GM12878 (cell line): ENCODE measurements at regions of chr7 and their contacts with region 1.

Region 1: DNA sequence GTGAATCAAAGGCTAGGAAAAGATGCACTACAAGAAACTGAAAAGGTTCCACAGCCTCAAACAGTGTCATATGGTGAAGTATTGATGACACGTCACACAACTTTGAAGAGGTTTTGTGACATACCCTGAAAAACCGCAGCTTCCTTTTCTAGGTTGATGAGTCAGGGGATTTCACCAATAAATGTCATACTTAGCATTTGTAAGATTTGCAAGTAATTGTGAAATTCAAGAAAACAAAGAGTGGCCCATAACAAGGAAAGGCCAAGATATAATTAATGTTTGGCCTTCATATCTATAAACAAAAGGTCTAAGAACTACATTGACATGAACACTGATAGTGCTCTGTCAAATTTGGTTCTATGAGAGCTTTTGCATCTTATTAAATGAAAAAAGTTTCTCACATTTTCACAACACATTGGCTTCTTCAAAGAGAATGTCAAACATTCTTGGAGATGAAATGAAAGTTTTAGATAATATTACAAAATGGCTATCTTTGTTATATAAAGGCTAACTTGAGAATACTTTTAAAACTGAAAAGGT is 62.0 kb upstream of the NAMPT start:
- DNase-seq: peak; percentile 92
- ATAC-seq: peak; percentile 86
- H3K4me3 ChIP-seq: no peak overlapping the region
- H3K27ac ChIP-seq: peak overlapping the region; percentile 80
- H3K4me1 ChIP-seq: peaks cover 20% of the 10 kb centered on the region
- H3K27me3 ChIP-seq: no peaks in the 10 kb centered on the region
- CTCF ChIP-seq: no peak
- EP300 ChIP-seq: peak; percentile 99
- POLR2A ChIP-seq: no peak
- RAD21 ChIP-seq: no peak

Region 2: DNA sequence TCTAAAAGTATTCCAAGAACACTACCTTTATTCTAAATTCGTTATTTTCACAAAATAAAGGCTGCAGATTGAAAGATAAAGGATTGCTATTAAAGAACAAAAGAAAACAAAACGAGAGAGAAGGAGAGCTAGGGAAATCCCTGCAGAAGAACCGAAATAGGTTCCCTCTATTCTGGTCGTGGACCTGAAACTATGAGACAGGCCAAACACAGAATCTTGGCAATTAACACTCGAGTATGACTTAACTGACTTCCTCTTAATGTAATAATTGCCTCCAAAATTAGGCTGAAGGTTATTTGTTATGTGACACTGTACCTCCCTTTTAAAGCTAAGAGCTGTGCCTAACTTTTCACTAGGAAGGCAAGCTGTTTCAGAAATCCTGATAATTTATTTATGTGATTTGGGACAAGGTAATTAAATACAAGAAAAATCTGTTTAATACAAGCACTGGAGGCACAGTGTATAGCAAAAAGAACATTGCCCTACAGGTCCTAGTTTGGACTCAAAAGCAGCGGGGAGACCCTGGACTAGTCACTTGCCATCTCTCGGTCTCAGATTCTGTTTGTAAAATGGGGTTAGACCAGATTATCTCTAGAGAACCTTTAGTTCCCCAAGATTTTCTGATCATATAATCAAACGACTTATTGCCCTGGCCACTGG is 73.6 kb before region 1 on chr7:
- CTCF ChIA-PET with region 1: no interaction called
- POLR2A ChIA-PET with region 1: interaction called, 4 read pairs
- RAD21 ChIA-PET with region 1: interaction called, 11 read pairs
- SMC1A ChIA-PET with region 1: interaction called, 9 read pairs
- in situ Hi-C with region 1: no loop called
- intact Hi-C with region 1: no loop called
- DNase-seq: peak; percentile 50
- ATAC-seq: peak; percentile 74
- H3K4me3 ChIP-seq: peak overlapping the region; percentile 28; the same call in 1 of the 2 replicates
- H3K27ac ChIP-seq: no peak overlapping the region
- H3K4me1 ChIP-seq: peaks cover 13% of the 10 kb centered on the region; the same call in 1 of the 2 replicates
- H3K27me3 ChIP-seq: no peaks in the 10 kb centered on the region
- CTCF ChIP-seq: no peak
- EP300 ChIP-seq: peak; percentile 38 to 45; a peak in 2 of 4 replicates
- POLR2A ChIP-seq: no peak
- RAD21 ChIP-seq: no peak

Region 3: GRCh38 chr7:106279425-106280197 is 67.1 kb before region 1 on chr7:
- CTCF ChIA-PET with region 1: interaction called, 20 read pairs
- POLR2A ChIA-PET with region 1: interaction called, 47 read pairs
- RAD21 ChIA-PET with region 1: interaction called, 87 read pairs
- SMC1A ChIA-PET with region 1: interaction called, 60 read pairs
- in situ Hi-C with region 1: no loop called
- intact Hi-C with region 1: no loop called
- DNase-seq: no peak
- ATAC-seq: peak; percentile 47
- H3K4me3 ChIP-seq: peak overlapping the region; percentile 16; the same call in 1 of the 2 replicates
- H3K27ac ChIP-seq: no peak overlapping the region
- H3K4me1 ChIP-seq: peaks cover 7% of the 10 kb centered on the region; the same call in 1 of the 2 replicates
- H3K27me3 ChIP-seq: no peaks in the 10 kb centered on the region
- CTCF ChIP-seq: no peak
- EP300 ChIP-seq: no peak
- POLR2A ChIP-seq: no peak
- RAD21 ChIP-seq: no peak

Region 4: GRCh38 chr7:106285051-106285854 is 61.5 kb before region 1 on chr7:
- CTCF ChIA-PET with region 1: interaction called, 20 read pairs
- POLR2A ChIA-PET with region 1: interaction called, 47 read pairs
- RAD21 ChIA-PET with region 1: interaction called, 87 read pairs
- SMC1A ChIA-PET with region 1: interaction called, 60 read pairs
- in situ Hi-C with region 1: loop called (anchors 5 kb)
- intact Hi-C with region 1: loop called (anchors 1 kb)
- DNase-seq: peak; percentile 97
- ATAC-seq: peak; percentile 77
- H3K4me3 ChIP-seq: peak overlapping the region; percentile 99
- H3K27ac ChIP-seq: peak overlapping the region; percentile 100
- H3K4me1 ChIP-seq: peaks cover 3% of the 10 kb centered on the region
- H3K27me3 ChIP-seq: no peaks in the 10 kb centered on the region
- CTCF ChIP-seq: no peak
- EP300 ChIP-seq: peak; percentile 42 to 52; a peak in 2 of 4 replicates
- POLR2A ChIP-seq: peak; percentile 78
- RAD21 ChIP-seq: no peak

Region 5: DNA sequence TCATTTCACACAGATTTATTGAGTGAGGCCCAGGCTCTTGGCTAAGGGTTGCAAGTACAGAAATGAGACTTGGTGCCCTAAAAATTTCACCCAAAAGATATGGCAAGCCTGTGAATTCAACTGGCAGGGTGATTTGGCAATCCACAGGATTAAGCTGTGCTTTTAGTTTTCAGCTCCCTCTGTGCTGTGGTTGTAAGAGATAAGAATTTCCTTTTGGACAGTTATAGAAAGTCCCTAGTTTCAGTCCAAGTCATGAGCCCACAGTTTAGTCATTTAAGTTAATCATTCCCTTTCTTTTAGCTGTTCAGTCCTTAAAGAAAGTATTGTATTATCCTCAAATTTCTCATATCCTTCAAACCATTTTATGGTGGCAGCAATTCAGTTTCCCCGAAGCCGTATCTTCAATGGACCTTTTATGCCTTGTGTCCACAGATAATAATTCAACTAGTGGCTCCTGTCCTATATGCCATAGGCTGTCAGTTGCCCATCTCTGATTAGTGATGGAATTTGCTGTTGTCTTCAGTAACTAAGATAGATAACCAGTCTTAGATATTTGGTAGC is 11.4 kb after region 1 on chr7:
- CTCF ChIA-PET with region 1: interaction called, 11 read pairs
- POLR2A ChIA-PET with region 1: interaction called, 23 read pairs
- RAD21 ChIA-PET with region 1: interaction called, 21 read pairs
- SMC1A ChIA-PET with region 1: interaction called, 29 read pairs
- in situ Hi-C with region 1: no loop called
- intact Hi-C with region 1: no loop called
- DNase-seq: no peak
- ATAC-seq: peak; percentile 95
- H3K4me3 ChIP-seq: no peak overlapping the region
- H3K27ac ChIP-seq: peak overlapping the region; percentile 31; the same call in 1 of the 2 replicates
- H3K4me1 ChIP-seq: no peaks in the 10 kb centered on the region; the same call in 1 of the 2 replicates
- H3K27me3 ChIP-seq: no peaks in the 10 kb centered on the region
- CTCF ChIP-seq: no peak
- EP300 ChIP-seq: peak in 1 of 2 experiments; percentile 67; a peak in 1 of 4 replicates
- POLR2A ChIP-seq: no peak
- RAD21 ChIP-seq: no peak

Region 6: GRCh38 chr7:106367018-106367420 is 20.3 kb after region 1 on chr7:
- CTCF ChIA-PET with region 1: interaction called, 6 read pairs
- POLR2A ChIA-PET with region 1: interaction called, 3 read pairs
- RAD21 ChIA-PET with region 1: interaction called, 13 read pairs
- SMC1A ChIA-PET with region 1: interaction called, 23 read pairs
- in situ Hi-C with region 1: no loop called
- intact Hi-C with region 1: no loop called
- DNase-seq: no peak
- ATAC-seq: peak; percentile 80
- H3K4me3 ChIP-seq: no peak overlapping the region
- H3K27ac ChIP-seq: no peak overlapping the region
- H3K4me1 ChIP-seq: no peaks in the 10 kb centered on the region
- H3K27me3 ChIP-seq: no peaks in the 10 kb centered on the region
- CTCF ChIP-seq: peak; percentile 35 to 48 (median 41); a peak in 5 of 6 replicates
- EP300 ChIP-seq: no peak
- POLR2A ChIP-seq: no peak
- RAD21 ChIP-seq: peak; percentile 75

Region 7: DNA sequence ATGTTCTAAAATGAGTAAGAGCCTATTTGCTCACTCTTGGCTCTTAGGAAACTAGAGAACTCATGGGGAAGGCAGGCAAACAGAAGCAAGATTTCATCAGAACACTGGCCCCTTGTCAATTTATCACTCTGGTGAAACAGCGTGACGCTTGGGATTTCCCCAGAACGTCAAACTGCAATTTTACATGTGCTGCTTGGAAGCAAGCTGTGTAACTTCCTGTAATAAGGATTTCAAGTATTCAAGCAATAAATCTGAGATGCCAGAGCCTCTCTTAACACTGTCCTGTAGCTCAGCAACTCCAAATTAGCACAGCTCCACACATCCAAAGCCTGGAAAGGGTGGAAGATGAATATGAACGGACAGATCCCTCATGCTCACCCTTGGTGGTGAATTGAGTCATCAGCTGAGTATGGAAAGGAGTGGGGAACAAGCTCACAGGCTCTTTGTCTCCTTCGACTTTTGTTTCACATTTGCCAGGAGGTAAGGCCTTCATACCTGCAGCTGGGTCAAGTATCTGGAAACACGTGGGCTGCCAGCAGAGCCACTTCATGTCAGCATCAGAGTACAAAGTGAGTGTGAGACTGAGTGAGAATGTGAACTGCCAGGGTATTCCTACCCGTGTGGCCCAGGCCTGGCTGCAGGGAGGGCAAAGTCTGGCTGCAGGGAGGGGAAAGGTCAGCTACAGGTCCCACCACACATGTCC is 78.4 kb after region 1 on chr7:
- CTCF ChIA-PET with region 1: no interaction called
- POLR2A ChIA-PET with region 1: interaction called, 3 read pairs
- RAD21 ChIA-PET with region 1: interaction called, 7 read pairs
- SMC1A ChIA-PET with region 1: interaction called, 6 read pairs
- in situ Hi-C with region 1: no loop called
- intact Hi-C with region 1: loop called (anchors 2 kb)
- DNase-seq: peak; percentile 93
- ATAC-seq: peak; percentile 94
- H3K4me3 ChIP-seq: peak overlapping the region; percentile 37; the same call in 1 of the 2 replicates
- H3K27ac ChIP-seq: peak overlapping the region; percentile 81
- H3K4me1 ChIP-seq: peaks cover 23% of the 10 kb centered on the region
- H3K27me3 ChIP-seq: no peaks in the 10 kb centered on the region
- CTCF ChIP-seq: no peak
- EP300 ChIP-seq: peak; percentile 83 to 85
- POLR2A ChIP-seq: no peak
- RAD21 ChIP-seq: no peak